ENCODE measurements at regions of chr14 and their contacts with region 1.

Region 1: DNA sequence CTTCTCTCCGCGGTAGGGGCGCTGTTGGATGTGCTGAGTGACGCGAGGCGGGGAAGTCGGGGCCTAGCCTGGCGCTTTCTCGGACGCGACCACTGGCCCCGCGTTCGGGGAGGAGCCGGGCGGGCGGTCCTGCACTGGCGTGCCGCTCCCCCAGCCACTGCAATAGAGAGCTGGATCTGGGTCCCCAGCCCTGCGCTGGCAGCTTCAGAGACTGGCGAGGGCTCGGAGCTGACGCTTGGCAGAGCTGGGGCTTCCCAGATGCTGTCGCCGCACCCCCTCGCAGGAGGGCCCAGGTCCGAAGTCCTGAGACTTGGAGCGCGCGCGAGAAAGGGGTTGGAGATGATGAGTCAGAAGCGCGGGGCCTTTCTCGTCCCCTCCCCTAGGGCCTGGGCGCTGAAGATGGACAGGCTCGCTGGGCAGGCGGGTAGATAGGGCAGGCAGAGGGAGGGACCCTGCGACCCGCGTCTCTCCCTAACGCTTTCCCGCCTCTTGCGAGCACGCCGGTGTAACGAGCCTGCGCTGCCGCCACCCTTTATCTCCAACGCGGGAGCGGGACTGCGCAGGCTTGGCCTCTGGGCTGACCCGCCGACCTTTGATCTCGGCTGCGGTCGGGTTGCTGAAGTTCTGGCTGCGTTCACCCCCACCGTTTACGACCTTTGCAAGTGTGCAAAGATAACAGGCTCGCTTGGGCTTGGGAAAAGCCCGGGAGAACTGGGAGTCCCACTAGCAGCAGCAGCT is 3.0 kb downstream of the TMEM253 start:
- DNase-seq: peak; percentile 98
- H3K4me3 ChIP-seq: peak overlapping the region; percentile 60 to 85
- H3K27ac ChIP-seq: peak overlapping the region; percentile 84 to 98
- H3K4me1 ChIP-seq: peaks cover 0 to 45% (median 38%) of the 10 kb centered on the region in 4 donors
- H3K27me3 ChIP-seq: no peaks in the 10 kb centered on the region
- CTCF ChIP-seq: peak; percentile 77 to 86

Region 2: GRCh38 chr14:20976291-20976690 is 127.6 kb before region 1 on chr14:
- intact Hi-C with region 1: no loop called
- DNase-seq: no peak
- H3K4me3 ChIP-seq: no peak overlapping the region
- H3K27ac ChIP-seq: no peak overlapping the region
- H3K4me1 ChIP-seq: peaks cover 0 to 23% (median 10%) of the 10 kb centered on the region in 4 donors
- H3K27me3 ChIP-seq: no peaks in the 10 kb centered on the region
- CTCF ChIP-seq: no peak

Region 3: GRCh38 chr14:21024585-21025370 is 79.1 kb before region 1 on chr14 and contains the start of gene NDRG2:
- intact Hi-C with region 1: loop called (anchors 5 kb)
- DNase-seq: peak; percentile 82 to 91
- H3K4me3 ChIP-seq: peak within 1 kb of the TSS; percentile 86 to 96
- H3K27ac ChIP-seq: peak within 1 kb of the TSS; percentile 96 to 97
- H3K4me1 ChIP-seq: peaks cover 6 to 47% (median 33%) of the 10 kb centered on the region in 4 donors
- H3K27me3 ChIP-seq: no peaks in the 10 kb centered on the region
- CTCF ChIP-seq: no peak

Region 4: DNA sequence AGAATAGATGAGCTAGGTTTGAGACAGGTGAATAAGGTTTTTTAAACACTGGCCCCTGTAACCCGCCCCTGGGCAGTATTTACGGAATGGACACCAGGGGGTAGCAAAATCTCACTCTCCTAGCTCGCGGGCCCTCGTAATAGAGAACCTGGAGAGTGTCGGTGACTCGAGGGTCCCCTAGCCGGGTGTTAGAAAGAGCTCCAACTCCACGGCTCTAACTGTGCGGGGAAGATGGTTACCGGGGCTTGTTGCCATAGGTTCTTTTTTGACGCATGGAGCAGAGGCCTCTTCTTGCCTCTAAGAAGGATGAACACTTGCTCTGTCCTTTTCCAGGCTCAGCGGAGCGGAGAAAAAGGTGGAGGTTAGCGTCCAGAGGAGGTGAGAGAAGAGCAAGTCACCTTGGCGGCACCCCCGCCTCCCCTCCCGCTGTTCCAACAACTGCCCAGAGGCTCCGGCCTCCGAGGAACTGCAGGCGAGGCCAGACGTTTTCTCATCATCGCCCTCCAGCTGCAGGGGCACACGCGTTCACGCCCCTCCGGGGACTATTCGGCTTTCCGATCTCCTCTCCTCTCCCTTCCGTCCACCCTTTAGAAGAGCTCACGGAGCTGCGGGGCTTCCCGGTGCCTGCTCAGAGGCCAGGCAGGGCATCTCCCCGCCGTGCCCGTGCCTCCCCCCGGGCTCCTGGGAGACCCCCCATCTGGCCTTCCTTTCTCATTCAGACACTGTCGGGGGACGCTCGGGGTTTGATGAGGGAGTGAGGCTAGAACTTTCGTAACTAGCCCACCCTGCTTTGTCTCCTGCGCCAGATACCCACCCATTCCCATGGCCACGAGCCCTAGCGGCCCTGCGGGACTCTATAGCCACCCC is 35.1 kb before region 1 on chr14:
- intact Hi-C with region 1: loop called (anchors 1 kb)
- DNase-seq: peak; percentile 70 to 77
- H3K4me3 ChIP-seq: peak overlapping the region; percentile 76 to 77
- H3K27ac ChIP-seq: peak overlapping the region; percentile 86 to 92
- H3K4me1 ChIP-seq: peaks cover 0 to 40% (median 28%) of the 10 kb centered on the region in 4 donors
- H3K27me3 ChIP-seq: no peaks in the 10 kb centered on the region
- CTCF ChIP-seq: peak; percentile 70 to 78

Region 5: GRCh38 chr14:21092273-21093011 is 11.4 kb before region 1 on chr14:
- intact Hi-C with region 1: loop called (anchors 1 kb)
- DNase-seq: peak; percentile 77 to 89
- H3K4me3 ChIP-seq: no peak overlapping the region
- H3K27ac ChIP-seq: peak overlapping the region; percentile 29 to 47
- H3K4me1 ChIP-seq: peaks cover 0 to 26% (median 20%) of the 10 kb centered on the region in 4 donors
- H3K27me3 ChIP-seq: no peaks in the 10 kb centered on the region
- CTCF ChIP-seq: peak; percentile 100

Region 6: DNA sequence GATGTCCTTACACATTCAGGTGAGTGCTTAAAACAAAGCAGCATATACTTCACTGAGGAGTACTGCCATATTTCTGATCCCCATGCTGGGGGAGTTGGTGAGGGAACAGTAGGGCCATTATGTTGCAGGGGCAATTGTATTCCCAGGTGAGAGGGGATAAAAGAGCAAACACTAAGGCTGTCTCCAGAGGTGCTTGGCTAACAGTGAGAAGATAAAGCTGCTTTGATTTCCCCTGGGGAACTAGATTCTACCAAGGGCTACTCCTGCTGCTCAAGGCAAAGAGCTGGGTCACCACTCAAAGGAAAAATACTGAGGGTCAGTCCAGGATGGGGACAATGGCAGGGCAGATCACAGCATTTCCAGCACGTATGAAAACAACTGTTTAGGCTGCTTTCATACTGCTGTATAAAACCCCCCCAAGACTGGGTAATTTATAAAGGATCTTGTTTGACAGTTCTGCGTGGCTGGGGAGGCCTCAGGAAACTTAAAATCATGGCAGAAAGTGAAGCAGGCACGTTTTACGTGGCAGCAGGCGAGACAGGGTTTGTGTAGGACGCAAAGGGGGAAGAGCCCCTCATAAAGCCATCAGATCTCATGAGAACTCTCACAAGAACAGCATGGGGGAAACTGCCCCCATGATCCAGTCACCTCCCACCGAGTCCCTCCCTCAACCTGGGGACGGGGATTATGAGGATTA is 99.7 kb after region 1 on chr14:
- intact Hi-C with region 1: no loop called
- DNase-seq: no peak
- H3K4me3 ChIP-seq: no peak overlapping the region
- H3K27ac ChIP-seq: no peak overlapping the region
- H3K4me1 ChIP-seq: no peaks in the 10 kb centered on the region
- H3K27me3 ChIP-seq: no peaks in the 10 kb centered on the region
- CTCF ChIP-seq: no peak